ENCODE measurements at regions of chr10 and their contacts with region 1.

Region 1: GRCh38 chr10:51389415-51390321 is 309.7 kb downstream of the CSTF2T start:
- DNase-seq: peak in 18 of 35 experiments; percentile 0 to 30 (median 10)
- ATAC-seq: no peak
- H3K4me3 ChIP-seq: no peak overlapping the region
- H3K4me3 Mint-ChIP-seq: no peak overlapping the region
- H3K27ac ChIP-seq: no peak overlapping the region
- H3K27ac Mint-ChIP-seq: no peak overlapping the region
- H3K4me1 ChIP-seq: no peaks in the 10 kb centered on the region
- H3K4me1 Mint-ChIP-seq: no peaks in the 10 kb centered on the region
- H3K27me3 ChIP-seq: no peaks in the 10 kb centered on the region
- H3K27me3 Mint-ChIP-seq: no peaks in the 10 kb centered on the region

Region 2: GRCh38 chr10:51358227-51358626 is 31.4 kb before region 1 on chr10:
- CTCF ChIA-PET with region 1: no interaction called
- POLR2A ChIA-PET with region 1: no interaction called
- DNase-seq: no peak
- ATAC-seq: no peak
- H3K4me3 ChIP-seq: no peak overlapping the region
- H3K4me3 Mint-ChIP-seq: no peak overlapping the region
- H3K27ac ChIP-seq: no peak overlapping the region
- H3K27ac Mint-ChIP-seq: no peak overlapping the region
- H3K4me1 ChIP-seq: no peaks in the 10 kb centered on the region
- H3K4me1 Mint-ChIP-seq: no peaks in the 10 kb centered on the region
- H3K27me3 ChIP-seq: no peaks in the 10 kb centered on the region
- H3K27me3 Mint-ChIP-seq: peaks cover 0 to 3% of the 10 kb centered on the region in 2 donors

Region 3: GRCh38 chr10:51524041-51524440 is 134.4 kb after region 1 on chr10:
- CTCF ChIA-PET with region 1: no interaction called
- POLR2A ChIA-PET with region 1: no interaction called
- DNase-seq: no peak
- ATAC-seq: no peak
- H3K4me3 ChIP-seq: no peak overlapping the region
- H3K4me3 Mint-ChIP-seq: no peak overlapping the region
- H3K27ac ChIP-seq: no peak overlapping the region
- H3K27ac Mint-ChIP-seq: no peak overlapping the region
- H3K4me1 ChIP-seq: no peaks in the 10 kb centered on the region
- H3K4me1 Mint-ChIP-seq: no peaks in the 10 kb centered on the region
- H3K27me3 ChIP-seq: no peaks in the 10 kb centered on the region
- H3K27me3 Mint-ChIP-seq: peaks cover 0 to 5% of the 10 kb centered on the region in 2 donors

Region 4: DNA sequence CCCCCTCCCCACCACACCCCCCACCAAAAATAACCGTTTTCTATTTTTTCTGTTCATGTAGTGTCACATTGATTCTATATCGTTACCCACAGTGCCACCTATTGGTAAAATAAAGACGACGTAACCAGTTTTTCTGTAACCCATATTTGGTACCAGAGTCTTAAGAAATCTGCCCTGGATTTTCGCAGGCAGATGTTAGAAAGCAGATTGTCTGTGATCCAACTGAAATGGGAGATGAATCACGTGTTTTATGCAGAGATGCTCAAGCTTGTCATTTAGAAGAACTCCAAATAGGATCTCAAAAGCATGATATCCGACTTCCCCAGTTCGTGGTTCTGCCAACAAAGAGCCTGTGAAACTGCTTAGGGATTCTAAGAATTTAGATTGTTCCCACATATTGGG is 570.8 kb after region 1 on chr10:
- CTCF ChIA-PET with region 1: interaction called, 8 to 12 read pairs
- POLR2A ChIA-PET with region 1: no interaction called
- DNase-seq: peak in 1 of 35 experiments; percentile 41
- ATAC-seq: no peak
- H3K4me3 ChIP-seq: no peak overlapping the region
- H3K4me3 Mint-ChIP-seq: no peak overlapping the region
- H3K27ac ChIP-seq: no peak overlapping the region
- H3K27ac Mint-ChIP-seq: no peak overlapping the region
- H3K4me1 ChIP-seq: no peaks in the 10 kb centered on the region
- H3K4me1 Mint-ChIP-seq: no peaks in the 10 kb centered on the region
- H3K27me3 ChIP-seq: peaks cover 0 to 2% of the 10 kb centered on the region in 2 experiments
- H3K27me3 Mint-ChIP-seq: peaks cover 12 to 18% of the 10 kb centered on the region in 2 donors